RWPE1 (cell line): ENCODE measurements at regions of chr14 and their contacts with region 1.

Region 1: DNA sequence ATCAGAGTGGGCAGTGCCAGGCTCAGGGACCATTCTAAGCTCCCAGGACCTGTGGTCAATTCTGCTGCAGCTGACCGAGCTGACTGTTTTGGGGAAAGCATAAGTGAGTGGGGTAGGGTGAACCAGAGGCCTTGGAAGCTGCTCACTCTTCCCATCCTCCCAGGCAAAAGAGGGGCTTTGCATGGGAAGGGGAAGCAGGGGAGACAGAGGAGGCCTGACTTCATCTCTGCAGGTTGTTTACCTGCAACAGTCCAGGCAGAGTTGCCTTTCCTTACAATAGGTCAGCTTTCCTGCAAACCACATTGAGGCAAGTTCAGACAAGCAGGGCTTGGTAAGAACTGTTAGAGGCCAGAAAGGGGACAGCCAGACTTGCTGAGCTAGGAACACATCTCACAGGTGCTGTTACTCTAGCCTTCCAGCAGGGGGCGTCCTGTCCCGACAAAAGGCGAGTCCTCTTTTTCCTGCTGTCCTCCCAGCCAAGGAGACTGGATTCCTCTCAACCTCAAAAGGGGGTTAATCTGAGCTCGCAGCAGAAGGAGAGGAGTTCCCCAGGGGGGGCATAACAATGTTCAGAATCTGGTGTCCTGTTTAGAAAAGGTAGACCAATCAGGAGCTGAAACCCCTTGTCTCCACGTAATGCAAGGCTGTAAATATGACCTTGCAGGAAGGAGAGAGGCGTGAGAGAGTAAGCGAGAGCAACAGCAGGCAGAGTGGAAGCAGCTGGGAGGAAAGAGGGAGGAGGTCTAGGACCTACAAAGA is 4.3 kb upstream of the DHRS2 start:
- DNase-seq: peak; percentile 88
- H3K27ac ChIP-seq: no peak overlapping the region
- CTCF ChIP-seq: peak; percentile 83

Region 2: GRCh38 chr14:23588884-23589598 is 42.8 kb before region 1 on chr14:
- CTCF ChIA-PET with region 1: interaction called, 15 read pairs
- POLR2A ChIA-PET with region 1: no interaction called
- DNase-seq: peak; percentile 85
- H3K27ac ChIP-seq: no peak overlapping the region
- CTCF ChIP-seq: peak; percentile 70